HAP-1 (cell line): ENCODE measurements at regions of chr12 and their contacts with region 1.

Region 1: DNA sequence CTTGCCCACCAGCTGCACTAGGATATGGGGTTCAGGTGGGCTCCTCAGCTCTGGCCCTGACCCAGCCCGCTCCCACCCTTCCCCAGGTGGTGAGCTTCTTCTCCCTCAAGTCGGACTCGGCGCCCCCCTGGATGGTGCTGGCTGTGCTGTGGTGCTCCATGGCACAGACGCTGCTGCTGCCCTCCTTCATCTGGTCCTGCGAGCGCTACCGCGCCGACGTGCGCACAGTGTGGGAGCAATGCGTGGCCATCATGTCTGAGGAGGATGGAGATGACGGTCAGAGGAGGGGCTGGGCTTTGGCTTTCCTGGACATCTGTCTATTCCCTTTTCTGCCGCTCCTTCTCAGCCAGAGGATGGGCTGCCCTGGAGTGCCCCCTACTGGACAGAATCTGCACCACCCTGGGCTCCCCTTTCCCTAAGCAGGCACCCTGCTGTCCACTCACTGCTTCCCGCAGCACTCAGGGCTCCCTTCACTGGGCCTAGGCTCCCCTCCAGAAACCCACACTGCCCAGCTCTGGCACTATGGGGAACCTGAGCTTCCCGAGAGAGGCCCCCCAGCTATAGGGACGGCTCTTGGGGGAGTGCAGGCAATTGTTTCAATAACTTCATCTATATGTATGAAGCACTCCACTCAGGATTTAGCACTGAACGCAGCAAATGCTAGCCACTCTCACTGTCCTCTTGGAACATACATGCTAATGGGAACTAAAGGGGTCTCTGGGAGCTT is 2.6 kb upstream of the P3H3 start:
- DNase-seq: peak; percentile 70 to 92
- H3K4me3 ChIP-seq: no peak overlapping the region
- H3K4me1 ChIP-seq: peaks cover 24% of the 10 kb centered on the region
- H3K27me3 ChIP-seq: no peaks in the 10 kb centered on the region

Region 2: DNA sequence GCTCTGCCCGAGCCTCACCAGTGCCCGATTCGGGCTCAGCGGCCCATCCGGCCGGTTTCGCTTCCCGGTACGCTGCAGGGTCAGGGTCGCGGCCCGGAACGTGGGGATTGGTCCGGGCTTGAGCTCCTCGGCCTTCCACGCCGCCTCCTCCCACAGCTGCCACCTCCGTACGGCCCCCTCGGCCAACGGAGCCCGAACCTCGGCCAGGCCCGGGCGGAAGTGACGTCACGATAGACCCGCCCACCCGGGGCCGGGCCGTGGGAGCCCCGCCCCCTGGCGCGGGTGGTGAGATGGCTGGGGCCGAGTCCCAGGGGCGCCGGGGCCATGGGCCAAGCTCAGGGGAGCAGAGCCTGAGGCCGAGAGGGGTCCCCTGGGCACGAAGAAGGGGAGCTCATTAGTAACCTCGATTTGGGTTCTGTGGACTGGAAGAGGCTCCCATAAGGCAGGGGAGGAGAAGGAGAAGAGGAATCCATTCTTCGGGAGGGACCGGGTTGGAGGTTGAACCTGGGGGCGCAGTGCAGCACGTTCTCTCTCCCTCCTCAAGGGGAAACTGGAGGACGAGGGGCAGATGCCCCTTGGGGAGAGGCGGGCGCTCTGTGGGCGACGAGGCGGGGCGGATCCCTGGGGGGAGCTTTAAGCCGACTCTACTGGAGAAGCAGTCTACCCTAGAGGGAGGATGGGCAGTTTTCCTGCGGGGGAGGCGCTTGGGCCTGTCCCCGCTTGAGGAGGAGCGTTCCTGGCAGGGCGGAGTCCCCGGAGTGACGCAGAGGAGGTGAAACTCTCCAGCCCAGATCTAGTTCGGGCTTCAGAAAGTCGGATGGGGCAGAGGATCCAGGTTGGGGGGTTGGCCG is 72.4 kb before region 1 on chr12 and contains the start of gene MLF2:
- in situ Hi-C with region 1: loop called (anchors 5 kb)
- DNase-seq: peak; percentile 96 to 99
- H3K4me3 ChIP-seq: peak within 1 kb of the TSS; percentile 100
- H3K4me1 ChIP-seq: peaks cover 10% of the 10 kb centered on the region
- H3K27me3 ChIP-seq: no peaks in the 10 kb centered on the region